Activated T-helper 2 cell treated with anti-CD3 and anti-CD28 coated beads, Interferon-gamma antibody, Interleukin-2, Interleukin-4, amounts not matched to agents 10 μg/mL and 5 μg/mL and 100 μg/mL, durations not matched to agents 14 hours and 24 hours and 36 hours (primary cell): ENCODE measurements at regions of chr6 and their contacts with region 1.

Region 1: GRCh38 chr6:31493875-31494694 is 3.9 kb upstream of the MICB start:
- DNase-seq: peak; percentile 69
- H3K4me3 Mint-ChIP-seq: peak overlapping the region; percentile 95
- H3K27ac Mint-ChIP-seq: peak overlapping the region; percentile 87
- H3K4me1 Mint-ChIP-seq: peaks cover 36% of the 10 kb centered on the region
- H3K27me3 Mint-ChIP-seq: no peaks in the 10 kb centered on the region

Region 2: GRCh38 chr6:31403283-31403989 is 90.6 kb before region 1 on chr6 and contains the start of gene MICA:
- intact Hi-C with region 1: loop called (anchors 5 kb)
- DNase-seq: peak; percentile 61
- H3K4me3 Mint-ChIP-seq: peak within 1 kb of the TSS; percentile 75
- H3K27ac Mint-ChIP-seq: peak within 1 kb of the TSS; percentile 14
- H3K4me1 Mint-ChIP-seq: peaks cover 56% of the 10 kb centered on the region
- H3K27me3 Mint-ChIP-seq: peaks cover 26% of the 10 kb centered on the region
- total RNA-seq, gene MICA: 5.6 and 6.0 TPM in 2 replicates

Region 3: DNA sequence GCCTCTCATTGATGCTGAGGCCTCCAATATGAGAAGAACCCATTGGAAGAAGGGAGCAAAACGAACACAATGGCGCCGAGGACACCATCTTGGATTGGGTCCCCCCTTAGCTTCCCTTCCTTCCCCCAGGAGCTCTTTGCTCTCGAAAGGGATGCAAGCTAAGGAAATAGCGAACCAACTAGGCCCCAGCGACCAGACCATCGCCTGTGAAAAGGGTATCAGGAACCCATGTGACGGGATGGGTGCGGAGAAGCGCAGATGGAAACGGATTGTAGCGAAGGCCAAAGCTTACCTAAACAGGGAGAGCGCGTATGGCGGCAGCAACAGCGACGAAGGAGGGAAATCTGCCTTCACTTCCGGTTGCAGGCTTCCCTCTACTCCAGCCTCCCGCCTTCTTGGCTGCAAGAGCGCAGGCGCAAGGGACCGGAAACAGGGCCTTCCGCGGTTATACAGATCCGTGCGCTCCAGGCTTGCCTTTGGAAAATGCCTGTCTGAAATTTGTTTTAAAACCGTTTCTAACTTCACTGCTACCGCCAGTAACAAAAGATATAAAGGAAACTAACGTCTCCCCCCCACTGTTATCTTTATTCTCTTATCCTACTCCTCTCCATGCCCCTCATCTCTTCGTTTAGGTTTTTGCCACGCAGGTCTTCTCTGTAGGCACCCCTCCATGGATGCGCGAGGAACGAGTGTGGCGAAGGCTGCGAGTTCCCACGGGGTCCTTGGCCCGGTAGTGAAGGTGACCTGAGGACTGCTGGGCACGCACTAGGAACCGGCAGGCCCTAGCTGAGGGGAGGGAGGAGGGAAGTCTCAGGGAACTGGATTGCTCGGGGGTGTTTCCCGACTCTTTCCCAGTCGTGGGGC is 47.8 kb after region 1 on chr6 and contains the start of gene DDX39B:
- intact Hi-C with region 1: loop called (anchors 1 kb)
- DNase-seq: peak; percentile 94
- H3K4me3 Mint-ChIP-seq: peak within 1 kb of the TSS; percentile 98
- H3K27ac Mint-ChIP-seq: peak within 1 kb of the TSS; percentile 95
- H3K4me1 Mint-ChIP-seq: peaks cover 42% of the 10 kb centered on the region
- H3K27me3 Mint-ChIP-seq: no peaks in the 10 kb centered on the region
- total RNA-seq, gene DDX39B: 579 and 583 TPM in 2 replicates

Region 4: DNA sequence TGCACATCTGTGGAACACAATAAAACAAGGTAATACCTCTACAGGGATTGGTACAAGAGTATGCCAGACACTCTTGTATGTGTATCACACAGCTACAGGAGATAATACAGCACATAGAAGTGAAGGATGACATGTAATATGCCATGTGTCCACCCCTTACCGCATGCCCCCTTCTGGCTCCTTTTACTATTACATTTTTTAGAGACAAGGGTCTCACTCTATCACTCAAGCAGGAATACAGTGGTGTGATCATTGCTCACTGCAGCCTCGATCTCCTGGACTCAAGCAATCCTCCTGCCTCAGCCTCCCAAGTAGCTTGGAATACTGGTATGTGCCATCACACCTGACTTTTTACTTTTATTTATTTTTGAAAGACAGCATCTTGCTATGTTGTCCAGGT is 102.9 kb after region 1 on chr6:
- intact Hi-C with region 1: loop called (anchors 5 kb)
- DNase-seq: no peak
- H3K4me3 Mint-ChIP-seq: no peak overlapping the region
- H3K27ac Mint-ChIP-seq: no peak overlapping the region
- H3K4me1 Mint-ChIP-seq: peaks cover 29% of the 10 kb centered on the region
- H3K27me3 Mint-ChIP-seq: no peaks in the 10 kb centered on the region